ENCODE measurements at regions of chr3 and their contacts with region 1.

Region 1: DNA sequence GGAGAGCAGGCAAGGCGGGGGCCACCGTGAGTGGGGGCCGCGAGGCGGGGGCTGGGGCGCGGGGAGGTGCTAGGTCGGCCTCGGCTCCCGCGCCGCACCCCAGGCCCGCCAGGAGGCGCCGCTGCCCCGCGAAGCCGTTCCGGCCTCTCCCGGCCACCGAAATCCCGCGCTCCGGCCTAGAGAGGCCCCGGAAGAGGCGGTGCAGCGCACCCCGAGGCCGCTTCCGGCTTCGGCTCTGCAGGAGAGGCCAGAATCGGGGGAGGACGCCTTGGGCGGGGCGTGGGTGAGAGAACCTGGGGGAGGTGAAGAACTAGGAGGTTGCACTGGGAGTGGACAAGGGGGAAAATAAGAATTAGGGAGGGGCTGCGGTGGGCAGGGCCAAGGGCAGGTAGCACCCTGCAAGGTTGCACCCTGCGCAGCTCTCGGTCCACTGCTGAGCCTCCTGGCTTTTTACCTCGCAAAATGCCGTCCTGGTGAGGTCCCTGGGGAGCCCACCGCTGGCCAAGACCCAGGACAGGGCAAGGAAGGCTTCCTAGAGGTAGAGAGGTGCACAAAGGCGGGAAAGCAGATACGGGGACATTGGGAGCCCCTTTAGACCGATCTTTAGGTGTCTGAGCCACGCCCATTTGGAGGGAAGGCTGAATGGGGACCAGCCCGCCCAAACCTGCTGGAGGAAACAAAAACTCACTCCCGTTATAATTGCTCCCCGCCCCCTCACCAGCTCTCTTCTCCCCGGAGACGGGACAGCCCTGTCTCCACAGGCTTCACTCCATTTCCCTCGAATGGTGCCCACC is 8.4 kb upstream of the GNAI2 start:
- DNase-seq: peak; percentile 96
- H3K4me3 ChIP-seq: peak overlapping the region; percentile 73 to 77
- H3K27ac ChIP-seq: peak overlapping the region; percentile 16 to 84; a peak in 3 of 4 replicates
- H3K4me1 ChIP-seq: peaks cover 0 to 9% of the 10 kb centered on the region in 2 experiments; a peak in 1 of 4 replicates
- H3K27me3 ChIP-seq: peaks cover 7% of the 10 kb centered on the region; the same call in 1 of the 2 replicates
- CTCF ChIP-seq: peak; percentile 69
- EP300 ChIP-seq: peak; percentile 19 to 41; a peak in 2 of 4 replicates
- RAD21 ChIP-seq: peak; percentile 86

Region 2: GRCh38 chr3:50126287-50127211 is 101.0 kb before region 1 on chr3:
- CTCF ChIA-PET with region 1: interaction called, 66 read pairs
- POLR2A ChIA-PET with region 1: no interaction called
- DNase-seq: peak; percentile 58
- H3K4me3 ChIP-seq: no peak overlapping the region
- H3K27ac ChIP-seq: peak overlapping the region in 1 of 2 experiments; percentile 74; a peak in 1 of 4 replicates
- H3K4me1 ChIP-seq: peaks cover 13 to 58% of the 10 kb centered on the region in 2 experiments
- H3K27me3 ChIP-seq: no peaks in the 10 kb centered on the region
- CTCF ChIP-seq: no peak
- EP300 ChIP-seq: no peak
- RAD21 ChIP-seq: no peak

Region 3: GRCh38 chr3:50154840-50155474 is 72.6 kb before region 1 on chr3 and contains the start of gene SEMA3F:
- CTCF ChIA-PET with region 1: interaction called, 14 read pairs
- POLR2A ChIA-PET with region 1: no interaction called
- DNase-seq: peak; percentile 96
- H3K4me3 ChIP-seq: peak within 1 kb of the TSS; percentile 64 to 67
- H3K27ac ChIP-seq: no peak within 1 kb of the TSS; a peak in 1 of 4 replicates
- H3K4me1 ChIP-seq: peaks cover 22 to 48% of the 10 kb centered on the region in 2 experiments; a peak in 2 of 4 replicates
- H3K27me3 ChIP-seq: no peaks in the 10 kb centered on the region
- CTCF ChIP-seq: peak; percentile 13; the same call in 1 of the 2 replicates
- EP300 ChIP-seq: no peak
- RAD21 ChIP-seq: peak; percentile 46; the same call in 1 of the 2 replicates
- polyA plus RNA-seq, gene SEMA3F: 23.9 and 30.4 TPM in 2 replicates

Region 4: DNA sequence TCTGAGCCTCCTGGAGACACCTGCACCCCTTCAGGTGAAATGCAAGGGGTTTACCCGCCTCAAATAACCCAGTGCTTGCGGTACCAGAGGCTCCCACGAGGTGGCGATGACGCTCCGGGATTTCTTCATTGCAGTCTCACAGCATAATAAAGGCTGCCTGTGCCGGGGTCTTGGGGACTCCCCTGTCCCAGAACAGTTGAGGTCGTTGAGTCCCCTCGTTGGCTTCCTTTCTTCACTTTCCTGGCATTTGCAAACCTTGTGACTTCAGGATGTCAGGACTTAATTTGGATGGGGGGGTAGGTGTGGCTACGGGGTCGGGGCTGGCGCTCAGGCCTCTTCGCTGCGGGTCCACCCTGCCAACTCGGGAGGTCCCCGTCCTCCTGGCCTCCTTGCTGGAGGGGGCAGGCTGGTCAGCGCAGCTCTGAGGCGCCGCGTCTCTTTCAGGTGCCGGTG is 34.9 kb before region 1 on chr3:
- CTCF ChIA-PET with region 1: interaction called, 1,375 read pairs
- POLR2A ChIA-PET with region 1: interaction called, 14 read pairs
- DNase-seq: peak; percentile 88
- H3K4me3 ChIP-seq: peak overlapping the region in 1 of 2 experiments; percentile 21; a peak in 1 of 4 replicates
- H3K27ac ChIP-seq: no peak overlapping the region
- H3K4me1 ChIP-seq: peaks cover 0 to 19% of the 10 kb centered on the region in 2 experiments; a peak in 1 of 4 replicates
- H3K27me3 ChIP-seq: peaks cover 33% of the 10 kb centered on the region
- CTCF ChIP-seq: peak; percentile 90
- EP300 ChIP-seq: no peak
- RAD21 ChIP-seq: peak; percentile 89

Region 5: DNA sequence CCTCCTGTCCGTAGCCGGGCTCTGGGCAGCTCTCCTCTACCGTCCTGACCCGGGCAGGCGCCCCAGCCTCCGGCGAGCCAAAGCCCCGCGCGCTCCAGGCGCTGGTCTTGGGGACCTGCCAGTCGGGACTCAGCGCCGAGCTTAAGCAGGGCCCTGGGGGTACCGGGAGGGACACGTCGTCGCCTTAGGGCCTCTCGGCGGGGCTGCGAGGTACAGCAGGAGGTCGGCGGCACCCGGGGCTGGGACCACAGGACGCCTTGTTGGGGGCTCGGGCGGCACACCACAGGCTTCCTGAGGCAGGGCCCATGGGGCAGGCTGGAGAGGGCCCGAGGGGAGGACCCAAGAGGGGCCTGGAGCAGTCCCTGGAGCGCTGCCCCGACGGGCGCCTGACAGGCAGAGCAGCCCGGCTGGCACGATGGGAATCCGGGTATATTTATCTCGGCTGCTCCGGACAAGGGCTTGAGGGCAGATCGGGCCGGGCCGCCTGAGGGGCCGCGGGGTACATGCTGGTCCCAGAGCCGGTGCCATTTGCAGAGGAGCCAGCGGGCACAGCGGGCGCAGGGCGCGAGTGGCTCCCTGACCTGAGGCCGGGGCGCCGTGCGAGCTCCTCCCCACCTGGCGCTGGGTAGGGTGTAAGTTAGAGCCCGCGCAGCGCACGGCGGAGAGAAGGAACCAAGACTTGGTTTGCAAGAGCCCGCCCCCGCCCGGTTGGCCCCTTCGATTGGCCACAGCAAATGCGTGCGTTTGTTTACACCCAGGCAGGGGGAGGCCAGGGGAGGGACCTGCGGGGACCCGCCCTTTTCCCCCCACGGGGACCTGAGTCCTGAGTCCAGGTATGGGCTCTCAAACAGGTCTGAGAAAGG is 21.9 kb before region 1 on chr3:
- CTCF ChIA-PET with region 1: interaction called, 192 read pairs
- POLR2A ChIA-PET with region 1: no interaction called
- DNase-seq: peak; percentile 62
- H3K4me3 ChIP-seq: peak overlapping the region; percentile 47 to 48; a peak in 3 of 4 replicates
- H3K27ac ChIP-seq: no peak overlapping the region
- H3K4me1 ChIP-seq: peaks cover 0 to 11% of the 10 kb centered on the region in 2 experiments; a peak in 1 of 4 replicates
- H3K27me3 ChIP-seq: peaks cover 28% of the 10 kb centered on the region
- CTCF ChIP-seq: no peak
- EP300 ChIP-seq: no peak
- RAD21 ChIP-seq: no peak

Measured in SK-N-SH (cell line).